ENCODE measurements at regions of chr1 and their contacts with region 1.

Region 1: DNA sequence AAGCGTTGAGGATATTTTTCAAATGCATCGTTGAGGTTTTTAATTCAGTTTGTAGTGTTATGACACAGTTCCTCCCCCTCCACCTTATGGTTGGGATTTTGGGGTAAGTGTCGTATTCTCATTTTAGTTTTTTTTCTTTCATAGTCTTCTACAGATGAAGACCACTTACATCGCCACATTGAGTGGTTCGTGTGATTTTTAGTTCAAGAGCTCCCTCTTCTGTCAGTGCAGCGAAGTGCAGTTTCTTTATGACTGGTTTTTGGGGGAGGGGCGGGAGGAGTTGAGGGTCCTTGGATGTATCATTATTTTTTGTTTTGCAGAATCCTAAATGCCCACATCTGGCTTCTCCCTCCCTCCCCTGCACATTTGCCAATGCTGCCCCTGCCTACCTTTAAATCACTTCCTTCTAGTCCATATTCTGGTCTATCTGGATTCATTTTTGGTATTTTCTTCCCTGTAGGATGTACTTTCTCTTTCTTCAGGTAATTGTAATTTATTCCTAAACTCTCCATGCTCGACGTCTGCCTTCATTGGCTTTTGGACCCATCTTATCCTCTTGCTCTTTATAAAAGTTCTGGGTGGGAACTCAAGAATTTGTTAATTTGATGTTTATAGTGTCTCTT is 433.1 kb downstream of the CAMTA1 start:
- DNase-seq: no peak
- ATAC-seq: peak; percentile 42 to 61 (median 55)
- H3K4me3 ChIP-seq: no peak overlapping the region
- H3K27ac ChIP-seq: no peak overlapping the region
- H3K4me1 ChIP-seq: no peaks in the 10 kb centered on the region
- H3K27me3 ChIP-seq: no peaks in the 10 kb centered on the region
- CTCF ChIP-seq: peak; percentile 67 to 87 (median 76)
- POLR2A ChIP-seq: no peak

Region 2: GRCh38 chr1:7042322-7043190 is 175.8 kb before region 1 on chr1:
- intact Hi-C with region 1: loop called (anchors 5 to 10 kb)
- DNase-seq: no peak
- ATAC-seq: peak; percentile 68 to 80 (median 72)
- H3K4me3 ChIP-seq: no peak overlapping the region
- H3K27ac ChIP-seq: no peak overlapping the region
- H3K4me1 ChIP-seq: no peaks in the 10 kb centered on the region
- H3K27me3 ChIP-seq: no peaks in the 10 kb centered on the region
- CTCF ChIP-seq: peak; percentile 62 to 64 (median 62)
- POLR2A ChIP-seq: no peak

Region 3: DNA sequence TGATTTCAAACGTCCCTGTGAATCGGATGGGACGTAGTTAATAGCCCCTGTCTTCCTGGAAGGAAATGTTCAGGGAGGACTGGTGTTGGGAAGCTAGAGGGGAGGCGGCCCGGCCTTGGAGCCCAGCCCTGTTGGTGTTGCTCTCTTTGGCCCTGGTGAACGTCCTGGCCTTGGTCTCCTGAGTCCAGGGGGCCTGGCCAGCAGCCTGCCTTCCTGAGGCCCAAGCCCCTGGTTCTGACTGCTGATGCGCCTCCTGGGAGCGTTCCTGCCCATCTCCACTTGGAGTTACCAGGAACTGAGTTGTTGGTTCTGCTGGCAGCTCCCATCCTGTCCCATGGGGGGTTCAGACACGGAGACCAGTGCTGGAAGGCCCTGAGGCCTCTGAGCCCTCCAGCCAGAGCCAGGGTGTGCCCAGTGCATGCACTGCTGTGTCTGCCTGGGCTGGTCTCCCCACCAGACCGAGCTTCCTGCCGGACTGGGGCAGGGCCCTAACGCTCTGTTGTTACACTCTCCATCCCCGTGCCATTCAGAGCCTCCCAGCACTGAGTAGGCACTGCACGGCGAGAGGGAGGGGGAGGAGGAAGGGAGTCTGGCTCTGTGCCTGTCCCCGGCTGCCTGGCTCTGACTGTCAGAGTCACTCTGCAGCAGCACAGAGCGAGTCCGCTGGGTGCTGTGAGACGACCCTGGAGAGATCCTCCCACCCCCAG is 170.3 kb after region 1 on chr1:
- intact Hi-C with region 1: no loop called
- DNase-seq: peak in 1 of 3 donors; percentile 40
- ATAC-seq: peak in 2 of 4 donors; percentile 16 to 28
- H3K4me3 ChIP-seq: no peak overlapping the region
- H3K27ac ChIP-seq: no peak overlapping the region
- H3K4me1 ChIP-seq: no peaks in the 10 kb centered on the region
- H3K27me3 ChIP-seq: no peaks in the 10 kb centered on the region
- CTCF ChIP-seq: no peak
- POLR2A ChIP-seq: no peak

Measured in right lobe of liver (tissue), 6 donors.